Left colon (tissue), 2 donors: ENCODE measurements at regions of chr2 and their contacts with region 1.

Region 1: DNA sequence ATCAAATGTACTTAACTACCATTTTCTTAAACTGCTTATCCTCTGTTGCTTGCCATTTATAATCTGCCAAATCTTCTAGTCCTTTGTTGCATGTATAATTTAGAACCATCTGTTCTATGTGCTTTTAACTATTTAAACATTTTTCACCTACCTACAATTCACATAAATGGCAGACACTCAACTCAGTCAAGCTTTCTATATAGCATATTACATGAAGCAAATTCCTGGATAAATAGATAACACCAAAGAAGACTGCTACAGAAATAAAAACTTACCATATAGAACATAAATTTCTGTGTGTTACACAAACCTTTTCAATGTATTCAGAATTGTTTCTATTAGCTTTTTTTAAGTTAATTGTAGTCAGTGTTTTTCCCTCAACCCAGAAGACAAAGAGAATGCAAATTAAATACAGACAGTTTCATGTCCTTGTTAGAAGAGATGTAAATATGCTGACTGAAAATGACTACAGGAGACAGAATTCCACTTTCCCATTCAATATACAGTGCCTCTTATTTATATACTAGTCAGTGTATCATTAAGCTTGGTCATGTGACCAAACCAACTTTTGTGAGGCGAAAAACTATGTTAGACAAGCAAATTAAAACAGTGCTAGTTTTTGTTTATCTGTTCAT is 2.6 kb downstream of the BAZ2B start:
- DNase-seq: no peak
- ATAC-seq: peak; percentile 12

Region 2: GRCh38 chr2:159712143-159712928 is 98.6 kb after region 1 on chr2 and contains the start of gene MARCHF7:
- intact Hi-C with region 1: loop called in 1 of 2 experiments (anchors 5 kb)
- DNase-seq: peak; percentile 96 to 97
- ATAC-seq: peak; percentile 95
- total RNA-seq, gene MARCHF7: 56.5 to 73.3 TPM